Dorsolateral prefrontal cortex (tissue), 120 donors: ENCODE measurements at regions of chr15 and their contacts with region 1.

Region 1: DNA sequence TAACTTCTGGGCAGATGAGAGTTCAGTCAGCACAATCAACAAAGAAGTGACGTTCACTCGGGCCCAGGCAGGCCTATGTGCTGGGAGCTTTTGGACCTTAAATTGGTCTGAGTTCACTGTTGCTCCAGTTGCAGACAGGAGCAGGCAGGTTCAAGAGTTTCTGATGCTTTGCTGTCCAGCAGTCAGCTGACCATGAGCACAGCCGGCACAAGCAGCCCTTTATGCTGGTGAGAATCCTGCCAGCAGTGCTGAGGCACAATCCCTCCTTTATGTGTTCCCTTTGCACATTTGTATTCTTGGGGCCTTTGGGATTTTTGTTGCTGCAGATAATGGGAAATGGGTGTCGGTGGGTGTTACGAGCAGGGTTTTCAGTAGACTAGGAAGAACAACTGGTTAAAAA is 81.2 kb upstream of the GOLGA8J start:
- DNase-seq: peak; percentile 31 to 97 (median 92)
- H3K4me3 ChIP-seq: peak overlapping the region in 6 of 59 donors; percentile 3 to 37 (median 10)
- H3K27ac ChIP-seq: peak overlapping the region; percentile 82 to 100 (median 97)
- H3K27me3 ChIP-seq: no peaks in the 10 kb centered on the region
- CTCF ChIP-seq: peak in 12 of 56 donors; percentile 8 to 51 (median 19)

Region 2: DNA sequence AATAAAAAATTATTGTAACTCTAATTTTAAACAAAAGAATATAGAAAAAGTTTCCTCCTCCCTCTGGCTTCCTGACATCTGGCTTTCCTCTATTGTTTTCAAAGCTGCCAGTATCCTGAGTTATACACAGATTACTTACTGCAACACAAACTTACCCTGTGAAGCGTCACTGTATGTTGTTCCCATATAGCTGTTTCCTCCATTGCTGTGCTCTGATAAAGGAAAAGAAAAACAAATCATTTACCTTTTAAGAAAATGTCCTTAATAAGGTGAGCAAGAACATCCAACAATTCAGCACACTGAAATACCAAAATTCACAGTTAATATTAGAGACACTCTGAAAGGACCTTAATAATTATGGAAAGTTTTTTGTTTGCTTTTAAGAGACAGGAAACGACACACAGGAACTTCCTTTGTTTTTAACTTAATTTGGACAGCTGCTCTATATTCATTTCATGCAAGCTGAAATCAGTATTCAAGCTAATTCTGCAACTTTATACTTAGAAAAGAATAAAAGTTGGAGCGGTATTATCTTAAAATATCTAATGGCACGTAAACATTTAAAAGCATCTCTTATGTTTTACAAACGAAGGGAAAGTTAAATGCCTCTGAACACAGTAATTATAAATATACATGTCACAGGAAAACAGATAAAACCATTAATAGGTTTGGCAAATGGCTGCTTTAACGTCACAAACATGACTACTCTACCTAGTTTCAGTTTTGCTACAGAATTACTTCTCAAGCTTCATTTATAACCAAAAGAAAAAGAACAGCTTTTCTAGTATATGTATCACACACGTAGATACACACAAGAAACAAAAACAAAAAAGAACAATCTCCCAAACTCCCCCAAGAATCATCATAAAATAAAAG is 200.9 kb before region 1 on chr15:
- intact Hi-C with region 1: no loop called
- DNase-seq: no peak
- H3K4me3 ChIP-seq: peak overlapping the region in 25 of 59 donors; percentile 2 to 39 (median 10)
- H3K27ac ChIP-seq: peak overlapping the region in 50 of 59 donors; percentile 0 to 68 (median 41)
- H3K27me3 ChIP-seq: no peaks in the 10 kb centered on the region
- CTCF ChIP-seq: no peak

Region 3: GRCh38 chr15:29888646-29889045 is 113.0 kb before region 1 on chr15:
- intact Hi-C with region 1: no loop called
- DNase-seq: peak in 3 of 10 donors; percentile 32 to 49 (median 49)
- H3K4me3 ChIP-seq: peak overlapping the region in 2 of 59 donors; percentile 4 to 7
- H3K27ac ChIP-seq: peak overlapping the region in 53 of 59 donors; percentile 3 to 84 (median 62)
- H3K27me3 ChIP-seq: no peaks in the 10 kb centered on the region
- CTCF ChIP-seq: peak in 2 of 56 donors; percentile 18

Region 4: DNA sequence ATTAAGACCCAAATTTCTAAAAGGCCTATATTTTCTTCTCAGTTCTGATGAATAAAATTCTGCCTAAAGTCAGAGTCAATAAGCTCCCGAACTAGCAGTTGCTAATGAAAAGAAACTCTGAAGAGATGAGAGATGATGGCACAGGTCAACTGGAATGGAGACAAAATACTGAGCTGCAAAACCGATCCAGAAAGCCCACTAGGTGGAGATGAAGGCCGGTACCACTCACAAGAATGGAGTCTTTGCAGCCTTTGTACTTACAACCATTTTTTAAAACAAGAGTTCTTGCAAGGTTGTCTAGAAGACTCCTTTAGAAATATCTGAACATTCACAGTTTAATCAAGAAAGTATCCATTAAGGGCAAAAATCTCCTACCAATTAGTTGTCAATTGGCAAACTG is 59.5 kb before region 1 on chr15:
- intact Hi-C with region 1: loop called in 1 of 2 experiments (anchors 2 kb)
- DNase-seq: peak in 1 of 10 donors; percentile 60
- H3K4me3 ChIP-seq: no peak overlapping the region
- H3K27ac ChIP-seq: peak overlapping the region; percentile 58 to 95 (median 89)
- H3K27me3 ChIP-seq: no peaks in the 10 kb centered on the region
- CTCF ChIP-seq: peak; percentile 32 to 84 (median 64)

Region 5: GRCh38 chr15:29967956-29968889 is 33.4 kb before region 1 on chr15:
- intact Hi-C with region 1: loop called in 1 of 2 experiments (anchors 5 kb)
- DNase-seq: peak in 7 of 10 donors; percentile 38 to 73 (median 50)
- H3K4me3 ChIP-seq: peak overlapping the region; percentile 52 to 84 (median 72)
- H3K27ac ChIP-seq: peak overlapping the region; percentile 81 to 99 (median 96)
- H3K27me3 ChIP-seq: no peaks in the 10 kb centered on the region
- CTCF ChIP-seq: peak in 3 of 56 donors; percentile 5 to 13 (median 9)